Body of pancreas (tissue), 4 donors: ENCODE measurements at regions of chr1 and their contacts with region 1.

Region 1: GRCh38 chr1:23539698-23540266 is 8.7 kb upstream of the E2F2 start:
- DNase-seq: peak; percentile 88 to 91 (median 90)
- ATAC-seq: peak; percentile 89
- H3K4me3 ChIP-seq: no peak overlapping the region
- H3K27ac ChIP-seq: no peak overlapping the region
- H3K4me1 ChIP-seq: peaks cover 10% of the 10 kb centered on the region
- H3K27me3 ChIP-seq: no peaks in the 10 kb centered on the region
- CTCF ChIP-seq: peak; percentile 78 to 96 (median 92)
- POLR2A ChIP-seq: no peak

Region 2: DNA sequence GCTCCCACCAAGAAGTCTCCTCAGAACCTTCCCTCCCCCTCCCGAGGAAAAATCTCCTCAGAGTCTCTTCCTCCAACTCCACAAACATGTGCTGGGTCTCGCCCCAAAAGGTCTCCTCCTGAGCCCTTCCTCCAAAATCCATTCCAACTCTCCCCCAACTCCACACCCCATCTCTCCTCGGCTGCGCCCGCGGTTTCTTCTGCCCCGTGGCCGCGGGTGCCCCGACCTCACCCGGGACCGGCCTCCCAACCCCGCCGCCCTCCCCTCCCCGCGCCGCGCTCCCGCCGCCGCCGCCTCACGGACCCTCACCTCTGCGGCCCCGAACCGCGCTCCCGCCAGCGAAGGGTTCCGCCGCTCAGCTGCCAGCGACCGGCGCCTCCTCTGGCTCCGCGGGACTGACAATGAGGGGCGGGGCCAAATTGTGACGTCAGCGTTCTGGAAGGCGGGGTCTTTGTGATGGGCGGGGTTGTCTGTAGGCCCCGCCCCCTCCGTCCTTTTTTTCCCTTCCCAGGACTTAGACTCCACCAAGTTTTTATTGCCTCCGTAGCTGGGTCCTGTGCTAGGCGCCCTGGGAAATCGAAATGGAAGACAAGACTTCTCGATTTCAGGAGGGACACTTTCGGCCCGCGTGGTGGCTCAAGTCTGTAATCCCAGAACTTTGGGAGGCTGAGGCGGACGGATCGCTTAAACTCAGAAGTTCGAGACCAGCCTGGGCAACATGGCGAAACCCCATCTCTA is 371.2 kb before region 1 on chr1 and contains the start of gene LUZP1:
- intact Hi-C with region 1: no loop called
- DNase-seq: peak; percentile 82 to 89 (median 88)
- ATAC-seq: peak; percentile 90
- H3K4me3 ChIP-seq: peak within 1 kb of the TSS; percentile 88 to 92
- H3K27ac ChIP-seq: peak within 1 kb of the TSS; percentile 79 to 94 (median 82)
- H3K4me1 ChIP-seq: peaks cover 8% of the 10 kb centered on the region
- H3K27me3 ChIP-seq: no peaks in the 10 kb centered on the region
- CTCF ChIP-seq: no peak
- POLR2A ChIP-seq: peak; percentile 79 to 86 (median 82)
- total RNA-seq, gene LUZP1: 4.6 to 8.0 TPM

Region 3: GRCh38 chr1:23436520-23437354 is 103.0 kb before region 1 on chr1:
- intact Hi-C with region 1: no loop called
- DNase-seq: peak in 1 of 4 donors; percentile 23
- ATAC-seq: no peak
- H3K4me3 ChIP-seq: no peak overlapping the region
- H3K27ac ChIP-seq: no peak overlapping the region
- H3K4me1 ChIP-seq: no peaks in the 10 kb centered on the region
- H3K27me3 ChIP-seq: no peaks in the 10 kb centered on the region
- CTCF ChIP-seq: no peak
- POLR2A ChIP-seq: no peak

Region 4: DNA sequence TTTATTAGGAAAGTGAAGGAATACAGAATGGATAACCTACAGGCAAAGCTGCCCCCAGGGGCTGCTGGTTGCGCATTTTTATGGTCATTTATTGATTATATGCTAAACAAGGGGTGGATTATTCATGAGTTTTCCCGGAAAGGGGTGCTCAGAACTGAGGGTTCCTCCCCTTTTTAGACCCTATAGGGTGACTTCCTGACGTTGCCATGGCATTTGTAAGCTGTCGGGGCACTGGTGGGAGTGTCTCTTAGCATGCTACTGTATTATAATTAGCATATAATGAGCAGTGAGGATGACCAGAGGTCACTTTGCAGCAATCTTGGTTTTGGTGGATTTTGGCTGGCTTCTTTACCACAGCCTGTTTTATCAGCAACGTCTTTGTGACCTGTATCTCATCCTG is 49.9 kb before region 1 on chr1:
- intact Hi-C with region 1: loop called (anchors 5 kb)
- DNase-seq: no peak
- ATAC-seq: no peak
- H3K4me3 ChIP-seq: no peak overlapping the region
- H3K27ac ChIP-seq: no peak overlapping the region
- H3K4me1 ChIP-seq: peaks cover 17% of the 10 kb centered on the region
- H3K27me3 ChIP-seq: no peaks in the 10 kb centered on the region
- CTCF ChIP-seq: no peak
- POLR2A ChIP-seq: no peak

Region 5: GRCh38 chr1:23638786-23639532 is 99.2 kb after region 1 on chr1:
- intact Hi-C with region 1: loop called (anchors 2 kb)
- DNase-seq: peak in 2 of 4 donors; percentile 20 to 27
- ATAC-seq: no peak
- H3K4me3 ChIP-seq: no peak overlapping the region
- H3K27ac ChIP-seq: no peak overlapping the region
- H3K4me1 ChIP-seq: peaks cover 4% of the 10 kb centered on the region
- H3K27me3 ChIP-seq: no peaks in the 10 kb centered on the region
- CTCF ChIP-seq: no peak
- POLR2A ChIP-seq: no peak

Region 6: GRCh38 chr1:23673086-23673813 is 133.5 kb after region 1 on chr1:
- intact Hi-C with region 1: no loop called
- DNase-seq: peak; percentile 25 to 61 (median 52)
- ATAC-seq: peak; percentile 53
- H3K4me3 ChIP-seq: no peak overlapping the region
- H3K27ac ChIP-seq: no peak overlapping the region
- H3K4me1 ChIP-seq: no peaks in the 10 kb centered on the region
- H3K27me3 ChIP-seq: no peaks in the 10 kb centered on the region
- CTCF ChIP-seq: no peak
- POLR2A ChIP-seq: no peak